PC-9 (cell line): ENCODE measurements at regions of chr12 and their contacts with region 1.

Region 1: DNA sequence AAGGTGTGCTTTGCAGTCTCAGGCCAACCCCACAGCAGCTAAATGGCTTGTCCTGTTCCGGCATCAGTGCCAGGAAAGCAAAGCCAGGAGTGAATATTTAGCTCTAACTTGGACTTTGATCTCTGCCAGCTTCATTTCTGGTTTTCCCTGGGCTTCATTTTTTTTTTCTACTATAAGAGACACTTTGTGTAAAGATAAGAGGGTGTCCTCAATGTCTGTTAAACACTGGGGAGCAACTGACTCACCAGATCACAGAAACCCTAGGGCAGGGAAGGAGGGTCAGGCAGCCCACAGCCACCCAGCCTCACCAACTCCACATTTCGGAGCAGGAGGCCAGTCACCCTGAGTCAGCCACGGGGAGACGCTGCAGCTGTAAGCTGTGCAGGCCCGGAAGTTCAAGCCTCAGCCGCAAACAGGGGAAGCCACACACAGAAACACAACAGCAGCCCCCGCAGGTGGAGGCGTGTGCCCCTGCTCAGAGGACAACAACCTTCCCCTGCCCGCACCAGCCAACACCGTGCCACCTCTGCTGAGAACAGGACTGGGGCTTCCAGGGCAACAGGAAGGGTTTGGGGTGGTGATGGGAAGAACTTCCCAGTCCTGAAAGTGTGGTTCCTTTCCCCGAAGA is 6.3 kb downstream of the TNFRSF1A start:
- DNase-seq: peak; percentile 76
- H3K4me3 ChIP-seq: peak overlapping the region; percentile 49
- H3K27ac ChIP-seq: peak overlapping the region; percentile 95
- H3K4me1 ChIP-seq: peaks cover 82% of the 10 kb centered on the region
- H3K27me3 ChIP-seq: no peaks in the 10 kb centered on the region
- CTCF ChIP-seq: peak; percentile 53; the same call in 1 of the 2 replicates

Region 2: DNA sequence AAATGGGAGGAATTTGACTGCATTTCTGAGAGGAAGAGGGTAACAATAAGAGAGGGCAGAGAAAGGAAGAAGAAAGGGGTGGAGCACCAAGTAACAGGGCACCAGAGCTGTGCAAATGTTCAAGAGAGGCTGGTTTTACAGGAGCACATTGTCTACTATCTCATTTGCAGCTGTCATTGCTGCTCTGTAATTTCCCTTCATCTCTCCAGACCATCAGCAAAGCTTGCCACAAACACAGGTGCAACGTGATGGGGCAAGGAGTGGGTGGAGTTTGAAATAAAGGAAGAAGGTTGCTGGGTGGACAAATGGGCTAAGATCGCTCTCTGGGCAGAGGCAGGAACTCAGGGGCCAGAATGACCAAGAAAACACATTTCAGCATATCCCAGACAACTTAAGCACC is 72.9 kb before region 1 on chr12:
- CTCF ChIA-PET with region 1: no interaction called
- POLR2A ChIA-PET with region 1: no interaction called
- intact Hi-C with region 1: no loop called
- DNase-seq: no peak
- H3K4me3 ChIP-seq: no peak overlapping the region
- H3K27ac ChIP-seq: no peak overlapping the region
- H3K4me1 ChIP-seq: peaks cover 21% of the 10 kb centered on the region
- H3K27me3 ChIP-seq: no peaks in the 10 kb centered on the region
- CTCF ChIP-seq: no peak

Region 3: GRCh38 chr12:6295094-6295811 is 40.3 kb before region 1 on chr12:
- CTCF ChIA-PET with region 1: no interaction called
- POLR2A ChIA-PET with region 1: interaction called, 9 read pairs
- intact Hi-C with region 1: loop called (anchors 1 kb)
- DNase-seq: peak; percentile 95 to 99
- H3K4me3 ChIP-seq: no peak overlapping the region; the same call in 1 of the 2 replicates
- H3K27ac ChIP-seq: peak overlapping the region; percentile 91
- H3K4me1 ChIP-seq: peaks cover 64% of the 10 kb centered on the region
- H3K27me3 ChIP-seq: no peaks in the 10 kb centered on the region
- CTCF ChIP-seq: no peak

Region 4: DNA sequence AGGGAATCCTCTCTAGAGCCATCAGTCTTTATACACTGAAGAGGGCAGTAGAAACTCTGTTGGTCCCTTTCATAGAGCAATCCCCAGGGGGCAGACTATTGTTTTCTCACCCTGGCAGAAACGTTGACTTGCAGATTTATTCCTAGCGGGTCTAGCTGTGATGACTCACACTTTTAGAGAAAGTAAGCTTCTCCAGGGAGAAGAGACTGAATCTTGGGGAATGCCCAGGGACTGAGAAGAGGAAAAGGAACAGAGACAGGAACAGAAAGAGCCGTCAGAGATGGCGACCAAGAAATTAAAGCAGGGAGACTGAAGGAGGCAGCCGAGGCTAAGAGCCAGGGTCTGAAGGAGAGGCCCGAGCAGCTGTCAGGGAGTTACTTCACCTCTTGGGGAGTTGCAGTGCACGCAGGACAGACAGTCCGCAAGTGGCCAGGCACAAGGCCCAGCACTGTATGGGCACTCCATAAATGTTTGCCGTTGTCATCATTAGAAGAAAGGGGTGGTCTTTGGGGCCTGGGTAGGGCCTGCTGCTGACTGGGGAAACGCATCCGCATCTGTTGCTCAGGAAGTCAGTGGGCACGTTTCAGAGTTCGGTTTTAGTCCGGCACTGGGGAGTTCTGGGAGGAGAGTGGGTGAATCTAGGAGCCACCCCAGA is 12.1 kb before region 1 on chr12:
- CTCF ChIA-PET with region 1: interaction called, 13 read pairs
- POLR2A ChIA-PET with region 1: interaction called, 14 read pairs
- intact Hi-C with region 1: no loop called
- DNase-seq: peak; percentile 75 to 88
- H3K4me3 ChIP-seq: no peak overlapping the region
- H3K27ac ChIP-seq: peak overlapping the region; percentile 60
- H3K4me1 ChIP-seq: peaks cover 39% of the 10 kb centered on the region
- H3K27me3 ChIP-seq: no peaks in the 10 kb centered on the region
- CTCF ChIP-seq: peak; percentile 79

Region 5: GRCh38 chr12:6370994-6371754 is 35.6 kb after region 1 on chr12:
- CTCF ChIA-PET with region 1: interaction called, 10 read pairs
- POLR2A ChIA-PET with region 1: interaction called, 42 read pairs
- intact Hi-C with region 1: loop called (anchors 1 kb)
- DNase-seq: peak; percentile 99
- H3K4me3 ChIP-seq: peak overlapping the region; percentile 62
- H3K27ac ChIP-seq: peak overlapping the region; percentile 89
- H3K4me1 ChIP-seq: peaks cover 57% of the 10 kb centered on the region
- H3K27me3 ChIP-seq: no peaks in the 10 kb centered on the region
- CTCF ChIP-seq: peak; percentile 43; the same call in 1 of the 2 replicates

Region 6: GRCh38 chr12:6423267-6424007 is 87.9 kb after region 1 on chr12:
- CTCF ChIA-PET with region 1: no interaction called
- POLR2A ChIA-PET with region 1: interaction called, 3 read pairs
- intact Hi-C with region 1: loop called (anchors 2 kb)
- DNase-seq: peak; percentile 81 to 82
- H3K4me3 ChIP-seq: no peak overlapping the region
- H3K27ac ChIP-seq: no peak overlapping the region
- H3K4me1 ChIP-seq: 0 out of 2 replicates have a peak, but pooled peaks cover 3% of the 10 kb centered on the region
- H3K27me3 ChIP-seq: no peaks in the 10 kb centered on the region
- CTCF ChIP-seq: peak; percentile 95

Region 7: DNA sequence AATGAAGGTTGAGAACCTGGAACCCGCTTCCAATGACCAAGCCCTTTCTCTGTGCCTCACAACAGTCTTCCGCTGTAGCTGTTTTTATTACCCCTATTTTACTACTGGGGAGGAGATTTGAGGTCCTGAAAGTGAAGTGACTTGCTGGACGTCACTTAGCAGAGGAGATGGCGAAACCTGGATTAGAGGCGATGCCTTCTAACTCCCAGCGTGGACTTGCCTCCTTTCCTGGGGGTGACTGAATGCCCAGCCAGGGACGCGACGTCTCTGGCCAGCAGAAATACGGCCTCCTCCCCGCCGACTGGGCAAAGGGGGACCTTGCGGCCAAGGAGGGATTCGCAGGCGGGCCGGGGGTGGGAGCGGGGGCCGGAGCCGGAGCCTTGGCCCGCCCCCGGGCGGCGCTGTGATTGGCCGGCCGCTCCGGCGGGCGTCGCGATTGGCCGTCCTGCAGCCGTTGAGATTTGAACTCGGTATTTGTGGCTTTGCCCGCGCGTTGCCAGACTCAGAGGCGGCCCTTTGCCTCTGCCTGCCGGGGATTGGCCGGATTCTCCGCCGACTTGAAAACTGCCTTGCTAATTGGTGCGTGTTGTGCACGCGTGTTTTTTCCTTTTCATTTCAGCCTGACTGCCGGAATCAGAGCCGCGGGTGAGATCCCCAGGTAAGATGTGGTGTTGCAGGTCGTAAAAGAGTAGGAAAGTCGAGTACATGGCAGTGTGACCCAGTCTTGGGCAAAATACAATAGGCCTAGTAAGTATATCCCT is 158.1 kb after region 1 on chr12 and contains the start of gene NCAPD2:
- CTCF ChIA-PET with region 1: no interaction called
- POLR2A ChIA-PET with region 1: interaction called, 35 read pairs
- intact Hi-C with region 1: no loop called
- DNase-seq: peak; percentile 93 to 98
- H3K4me3 ChIP-seq: peak within 1 kb of the TSS; percentile 87
- H3K27ac ChIP-seq: peak within 1 kb of the TSS; percentile 85
- H3K4me1 ChIP-seq: peaks cover 24% of the 10 kb centered on the region
- H3K27me3 ChIP-seq: no peaks in the 10 kb centered on the region
- CTCF ChIP-seq: peak; percentile 46; the same call in 1 of the 2 replicates
- total RNA-seq, gene NCAPD2: 220 and 266 TPM in 2 replicates